Activated B cell treated with CpG ODN at 0.5 μM for 24 hours (primary cell): ENCODE measurements at regions of chr1 and their contacts with region 1.

Region 1: DNA sequence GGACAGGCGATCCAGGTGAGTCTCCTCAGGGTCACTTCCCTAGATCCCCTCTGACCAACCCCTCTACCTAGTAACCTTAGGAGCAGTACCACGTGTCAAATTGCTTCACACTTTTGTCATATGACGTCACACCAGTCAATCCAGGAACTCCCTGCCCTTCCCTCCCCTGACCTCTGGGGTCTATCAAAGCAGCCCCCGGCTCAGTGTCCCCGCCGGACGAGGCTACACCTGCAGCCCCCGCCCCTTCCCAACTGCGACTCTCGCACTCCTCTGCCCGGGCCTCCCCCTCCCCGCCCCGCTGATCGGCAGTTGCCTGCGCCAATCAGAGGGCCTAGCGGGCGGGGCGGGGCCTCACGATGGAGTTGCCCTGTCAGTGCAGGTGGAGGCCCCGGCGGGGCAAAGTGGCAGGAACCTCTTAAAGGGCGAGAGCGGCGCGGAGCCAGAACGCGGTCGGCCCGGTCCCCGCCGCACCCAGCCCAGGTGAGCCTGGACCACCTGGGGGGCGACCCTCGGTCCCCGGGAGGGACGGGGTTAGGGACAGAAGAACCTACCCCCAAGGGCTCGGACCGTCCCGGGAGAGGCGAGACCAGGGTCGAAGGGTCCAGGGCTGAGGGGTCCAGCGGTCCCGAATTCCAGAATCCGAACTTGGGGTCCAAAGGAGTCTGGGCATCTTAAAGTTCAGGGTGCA is 27.5 kb upstream of the EPB41 start:
- DNase-seq: peak; percentile 94
- ATAC-seq: peak; percentile 75
- H3K4me3 Mint-ChIP-seq: peak overlapping the region; percentile 88
- H3K27ac Mint-ChIP-seq: peak overlapping the region; percentile 91
- H3K4me1 Mint-ChIP-seq: peaks cover 58% of the 10 kb centered on the region
- H3K27me3 Mint-ChIP-seq: no peaks in the 10 kb centered on the region
- CTCF ChIP-seq: no peak

Region 2: DNA sequence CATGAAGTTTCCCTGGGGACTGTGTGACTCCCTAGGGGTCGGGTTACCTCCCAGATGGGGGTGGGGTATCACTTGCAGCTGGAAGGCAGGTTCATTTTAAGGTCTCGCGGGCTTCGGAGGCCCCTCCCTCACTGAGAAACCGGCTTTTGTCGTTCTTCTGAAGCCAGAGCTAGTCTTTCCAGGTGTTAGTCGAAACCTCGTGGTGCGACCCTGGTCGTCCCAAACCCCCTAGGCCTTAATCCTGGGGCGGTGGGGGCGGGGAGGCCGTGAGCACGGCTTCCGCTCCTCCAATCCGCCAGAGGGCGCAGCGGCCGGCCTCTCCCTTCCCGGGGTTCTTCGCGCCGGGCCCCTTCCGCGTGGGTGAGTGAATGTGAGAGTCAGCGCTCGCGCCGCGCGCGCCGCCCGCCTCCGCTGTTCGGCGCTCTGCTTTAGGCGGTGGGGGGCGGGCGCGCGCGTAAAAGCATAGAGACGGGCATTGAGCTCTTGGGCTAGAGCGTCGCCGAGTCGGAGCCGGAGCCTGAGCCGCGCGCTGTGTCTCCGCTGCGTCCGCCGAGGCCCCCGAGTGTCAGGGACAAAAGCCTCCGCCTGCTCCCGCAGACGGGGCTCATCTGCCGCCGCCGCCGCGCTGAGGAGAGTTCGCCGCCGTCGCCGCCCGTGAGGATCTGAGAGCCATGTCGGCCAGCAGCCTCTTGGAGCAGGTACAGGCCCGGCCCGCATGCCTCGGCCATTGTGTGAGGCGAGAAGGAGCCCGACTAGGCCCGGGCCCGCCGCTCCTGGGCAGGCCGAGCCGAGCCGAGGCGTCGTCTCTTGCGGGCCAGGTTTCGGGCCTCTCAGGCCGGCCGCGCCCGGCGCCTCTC is 150.2 kb before region 1 on chr1 and contains the start of gene YTHDF2:
- CTCF ChIA-PET with region 1: interaction called, 4 read pairs
- POLR2A ChIA-PET with region 1: interaction called, 5 read pairs
- intact Hi-C with region 1: loop called (anchors 2 kb)
- DNase-seq: peak; percentile 96
- ATAC-seq: peak; percentile 93
- H3K4me3 Mint-ChIP-seq: peak within 1 kb of the TSS; percentile 96
- H3K27ac Mint-ChIP-seq: peak within 1 kb of the TSS; percentile 91
- H3K4me1 Mint-ChIP-seq: peaks cover 30% of the 10 kb centered on the region
- H3K27me3 Mint-ChIP-seq: no peaks in the 10 kb centered on the region
- CTCF ChIP-seq: peak; percentile 83
- total RNA-seq, gene YTHDF2: 70.6 and 81.2 TPM in 2 replicates

Region 3: DNA sequence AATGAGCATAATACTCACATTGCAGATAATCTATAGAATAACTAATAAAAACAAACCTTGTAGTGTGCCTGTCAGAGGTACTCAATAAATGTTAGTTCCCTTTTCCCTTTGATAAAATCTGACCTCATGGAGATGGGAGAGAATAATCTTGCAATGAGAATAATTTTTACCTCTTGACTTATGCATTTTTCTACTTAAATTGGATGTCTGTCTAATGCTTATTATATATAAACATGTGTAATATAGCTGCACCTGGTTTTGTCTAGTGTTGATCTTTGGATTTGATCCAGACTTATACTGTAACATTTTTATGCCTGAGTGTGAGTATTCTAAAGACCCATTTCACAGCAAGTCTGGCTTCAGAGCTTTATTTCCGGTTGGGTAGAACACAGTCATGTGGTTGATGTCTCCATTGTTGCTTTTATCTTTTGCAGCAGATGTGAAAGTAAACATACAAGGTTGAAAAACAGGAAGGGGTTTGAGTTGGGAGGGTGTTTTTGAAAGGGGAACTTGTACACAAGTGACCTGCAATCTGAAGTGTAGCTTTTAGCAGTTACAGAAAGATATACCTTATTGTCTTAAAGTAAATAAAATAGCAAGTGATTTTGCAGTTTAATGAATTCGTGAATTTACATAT is 39.9 kb after region 1 on chr1:
- CTCF ChIA-PET with region 1: interaction called, 4 read pairs
- POLR2A ChIA-PET with region 1: interaction called, 15 read pairs
- intact Hi-C with region 1: loop called (anchors 1 kb)
- DNase-seq: no peak
- ATAC-seq: peak; percentile 83
- H3K4me3 Mint-ChIP-seq: peak overlapping the region; percentile 74
- H3K27ac Mint-ChIP-seq: peak overlapping the region; percentile 80
- H3K4me1 Mint-ChIP-seq: peaks cover 70% of the 10 kb centered on the region
- H3K27me3 Mint-ChIP-seq: no peaks in the 10 kb centered on the region
- CTCF ChIP-seq: no peak

Region 4: DNA sequence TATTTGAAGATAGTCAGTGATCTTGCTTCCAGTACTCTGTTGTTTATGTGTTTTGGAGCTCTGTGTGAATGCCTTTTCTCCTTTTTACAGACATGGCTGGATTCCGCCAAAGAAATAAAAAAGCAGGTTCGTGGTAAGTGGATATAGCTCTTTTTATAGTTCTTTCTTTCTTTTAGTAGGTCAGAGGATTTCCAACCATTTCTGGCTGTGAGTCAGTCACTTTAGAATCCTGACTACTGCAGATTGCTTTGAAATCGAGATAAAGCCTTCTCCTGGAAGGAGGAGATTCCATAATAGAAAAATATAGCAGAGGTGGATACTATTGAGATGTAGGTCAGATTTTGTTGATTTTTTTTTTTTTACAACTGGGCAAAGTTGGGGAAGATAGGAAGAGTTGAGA is 124.9 kb after region 1 on chr1:
- CTCF ChIA-PET with region 1: no interaction called
- POLR2A ChIA-PET with region 1: no interaction called
- intact Hi-C with region 1: no loop called
- DNase-seq: no peak
- ATAC-seq: no peak
- H3K4me3 Mint-ChIP-seq: no peak overlapping the region
- H3K27ac Mint-ChIP-seq: no peak overlapping the region
- H3K4me1 Mint-ChIP-seq: no peaks in the 10 kb centered on the region
- H3K27me3 Mint-ChIP-seq: no peaks in the 10 kb centered on the region
- CTCF ChIP-seq: no peak

Region 5: DNA sequence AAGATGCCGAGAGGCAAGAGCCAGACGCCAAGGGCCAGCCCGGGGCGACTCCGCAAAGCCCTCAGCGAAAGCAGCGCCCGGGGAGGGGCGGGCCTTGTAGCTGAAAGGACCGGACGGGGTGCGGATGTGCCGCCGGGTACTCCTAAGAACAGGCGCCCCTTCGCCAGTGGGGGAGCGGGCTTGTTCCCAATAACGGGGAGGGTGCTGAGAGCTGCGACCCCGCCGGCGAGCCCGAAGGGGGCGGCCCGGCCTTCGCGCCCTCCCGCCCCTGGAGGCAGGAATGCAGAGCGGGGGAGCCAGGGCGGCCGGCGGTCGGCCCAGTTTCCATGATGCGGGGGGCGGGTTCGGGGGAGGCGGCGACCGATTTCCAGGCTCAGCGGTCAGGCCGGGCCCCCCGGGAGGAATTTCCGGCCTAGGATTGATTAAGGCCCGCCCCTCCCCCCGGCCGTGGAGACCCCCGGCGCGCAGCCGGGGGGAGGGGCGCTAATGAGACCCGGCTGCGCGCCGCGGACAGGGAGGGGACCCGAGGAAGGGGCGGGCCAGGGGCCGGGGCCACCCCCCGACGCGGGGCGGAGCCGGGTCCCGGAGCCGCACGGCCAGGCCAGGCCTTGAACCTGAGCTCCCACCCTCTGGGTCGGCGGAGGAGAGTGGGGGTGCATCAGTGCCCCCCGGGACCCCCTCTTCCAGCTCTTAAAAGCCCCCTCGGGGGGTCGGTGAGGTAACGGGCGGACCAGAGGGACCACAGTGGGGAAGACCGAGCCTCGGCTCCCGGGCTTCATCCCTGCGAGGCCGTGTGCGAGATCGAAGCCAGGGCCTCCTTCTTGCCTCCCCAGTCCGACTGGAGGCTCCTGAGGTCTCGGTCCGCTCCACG is 237.7 kb after region 1 on chr1:
- CTCF ChIA-PET with region 1: interaction called, 3 read pairs
- POLR2A ChIA-PET with region 1: no interaction called
- intact Hi-C with region 1: loop called (anchors 1 kb)
- DNase-seq: peak; percentile 56
- ATAC-seq: peak; percentile 49
- H3K4me3 Mint-ChIP-seq: peak overlapping the region; percentile 79
- H3K27ac Mint-ChIP-seq: no peak overlapping the region
- H3K4me1 Mint-ChIP-seq: peaks cover 19% of the 10 kb centered on the region
- H3K27me3 Mint-ChIP-seq: peaks cover 10% of the 10 kb centered on the region
- CTCF ChIP-seq: no peak

Region 6: DNA sequence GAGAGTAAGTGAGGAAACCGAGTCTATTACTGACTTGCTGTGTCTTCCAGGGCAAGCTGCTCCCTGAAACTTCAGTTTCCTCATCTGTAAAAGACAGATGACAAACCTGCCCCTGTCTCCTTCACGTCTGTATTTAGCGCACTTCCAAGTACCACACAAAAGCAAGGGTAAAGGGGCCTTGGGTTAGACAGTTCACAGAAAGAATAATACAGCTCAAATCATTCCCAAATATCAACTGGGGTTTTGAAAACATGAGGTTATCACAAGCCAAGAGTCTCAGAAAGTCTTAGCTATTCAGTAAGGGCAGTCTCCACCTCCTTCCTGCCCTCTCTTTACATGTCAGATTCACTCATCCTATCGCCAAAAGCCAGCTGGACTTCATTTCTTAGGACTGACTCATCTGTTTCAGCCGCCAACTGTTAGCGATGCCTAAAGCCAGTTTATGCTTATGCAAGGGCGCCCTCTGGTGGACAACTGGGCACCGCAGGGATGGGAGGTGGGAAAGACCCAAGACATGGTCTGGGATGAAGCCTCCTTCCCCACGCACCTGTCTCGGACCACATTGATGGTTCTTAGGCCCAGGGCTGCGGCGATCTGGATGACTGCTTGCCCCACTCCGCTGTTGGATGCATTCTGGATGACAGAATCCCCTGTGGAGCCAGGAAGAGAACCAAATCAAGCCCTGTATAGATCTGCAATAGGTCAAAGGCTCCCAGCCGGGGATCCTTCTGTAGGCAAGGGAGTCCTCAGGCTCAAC is 315.9 kb after region 1 on chr1:
- CTCF ChIA-PET with region 1: interaction called, 40 read pairs
- POLR2A ChIA-PET with region 1: interaction called, 4 read pairs
- intact Hi-C with region 1: loop called (anchors 1 kb)
- DNase-seq: peak; percentile 80
- ATAC-seq: peak; percentile 98
- H3K4me3 Mint-ChIP-seq: no peak overlapping the region
- H3K27ac Mint-ChIP-seq: no peak overlapping the region
- H3K4me1 Mint-ChIP-seq: peaks cover 3% of the 10 kb centered on the region
- H3K27me3 Mint-ChIP-seq: no peaks in the 10 kb centered on the region
- CTCF ChIP-seq: no peak